ENCODE measurements at regions of chr18 and their contacts with region 1.

Region 1: GRCh38 chr18:30814446-30814845 is 228.1 kb downstream of the DSC3 start:
- DNase-seq: no peak
- ATAC-seq: no peak
- H3K4me3 ChIP-seq: no peak overlapping the region
- H3K4me3 Mint-ChIP-seq: no peak overlapping the region
- H3K27ac ChIP-seq: no peak overlapping the region
- H3K27ac Mint-ChIP-seq: no peak overlapping the region
- H3K4me1 ChIP-seq: no peaks in the 10 kb centered on the region
- H3K4me1 Mint-ChIP-seq: no peaks in the 10 kb centered on the region
- H3K27me3 ChIP-seq: no peaks in the 10 kb centered on the region
- H3K27me3 Mint-ChIP-seq: no peaks in the 10 kb centered on the region
- CTCF ChIP-seq: no peak

Region 2: GRCh38 chr18:30415903-30416302 is 398.5 kb before region 1 on chr18:
- intact Hi-C with region 1: no loop called
- DNase-seq: no peak
- ATAC-seq: no peak
- H3K4me3 ChIP-seq: no peak overlapping the region
- H3K4me3 Mint-ChIP-seq: no peak overlapping the region
- H3K27ac ChIP-seq: no peak overlapping the region
- H3K27ac Mint-ChIP-seq: no peak overlapping the region
- H3K4me1 ChIP-seq: no peaks in the 10 kb centered on the region
- H3K4me1 Mint-ChIP-seq: no peaks in the 10 kb centered on the region
- H3K27me3 ChIP-seq: no peaks in the 10 kb centered on the region
- H3K27me3 Mint-ChIP-seq: no peaks in the 10 kb centered on the region
- CTCF ChIP-seq: no peak

Region 3: GRCh38 chr18:30763902-30764350 is 50.5 kb before region 1 on chr18:
- intact Hi-C with region 1: loop called (anchors 2 kb)
- DNase-seq: no peak
- ATAC-seq: no peak
- H3K4me3 ChIP-seq: no peak overlapping the region
- H3K4me3 Mint-ChIP-seq: no peak overlapping the region
- H3K27ac ChIP-seq: no peak overlapping the region
- H3K27ac Mint-ChIP-seq: no peak overlapping the region
- H3K4me1 ChIP-seq: no peaks in the 10 kb centered on the region
- H3K4me1 Mint-ChIP-seq: no peaks in the 10 kb centered on the region
- H3K27me3 ChIP-seq: no peaks in the 10 kb centered on the region
- H3K27me3 Mint-ChIP-seq: no peaks in the 10 kb centered on the region
- CTCF ChIP-seq: no peak

Region 4: DNA sequence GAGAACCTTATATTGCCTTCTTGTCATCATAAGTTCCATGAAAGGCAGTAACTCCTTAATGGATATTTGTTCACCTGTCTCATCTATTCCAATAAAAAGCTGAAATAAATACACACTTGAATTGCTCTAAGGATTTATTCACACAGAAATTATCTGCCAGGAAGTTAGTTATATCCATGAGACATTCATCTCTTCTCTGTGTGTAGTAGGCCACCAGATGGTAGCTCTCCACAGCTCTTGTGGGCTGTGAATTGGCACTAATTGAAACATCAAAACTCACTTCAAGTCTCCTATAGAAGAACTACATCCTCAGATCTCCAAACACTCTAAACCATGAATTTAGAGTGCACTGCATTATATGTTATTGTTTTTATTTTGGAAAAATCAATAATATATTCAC is 38.5 kb after region 1 on chr18:
- intact Hi-C with region 1: no loop called
- DNase-seq: no peak
- ATAC-seq: no peak
- H3K4me3 ChIP-seq: no peak overlapping the region
- H3K4me3 Mint-ChIP-seq: no peak overlapping the region
- H3K27ac ChIP-seq: no peak overlapping the region
- H3K27ac Mint-ChIP-seq: no peak overlapping the region
- H3K4me1 ChIP-seq: no peaks in the 10 kb centered on the region
- H3K4me1 Mint-ChIP-seq: no peaks in the 10 kb centered on the region
- H3K27me3 ChIP-seq: no peaks in the 10 kb centered on the region
- H3K27me3 Mint-ChIP-seq: no peaks in the 10 kb centered on the region
- CTCF ChIP-seq: no peak

Region 5: GRCh38 chr18:31064130-31064529 is 249.7 kb after region 1 on chr18:
- intact Hi-C with region 1: no loop called
- DNase-seq: no peak
- ATAC-seq: no peak
- H3K4me3 ChIP-seq: no peak overlapping the region
- H3K4me3 Mint-ChIP-seq: no peak overlapping the region
- H3K27ac ChIP-seq: no peak overlapping the region
- H3K27ac Mint-ChIP-seq: no peak overlapping the region
- H3K4me1 ChIP-seq: no peaks in the 10 kb centered on the region
- H3K4me1 Mint-ChIP-seq: no peaks in the 10 kb centered on the region
- H3K27me3 ChIP-seq: no peaks in the 10 kb centered on the region
- H3K27me3 Mint-ChIP-seq: no peaks in the 10 kb centered on the region
- CTCF ChIP-seq: no peak